IMR-90 (cell line): ENCODE measurements at regions of chrX and their contacts with region 1.

Region 1: GRCh38 chrX:138745196-138745595 is 33.7 kb upstream of the FGF13 start:
- DNase-seq: peak; percentile 60
- ATAC-seq: peak; percentile 92
- H3K4me3 ChIP-seq: no peak overlapping the region
- H3K27ac ChIP-seq: no peak overlapping the region
- H3K4me1 ChIP-seq: no peaks in the 10 kb centered on the region
- H3K27me3 ChIP-seq: no peaks in the 10 kb centered on the region
- CTCF ChIP-seq: peak; percentile 72
- POLR2A ChIP-seq: no peak
- RAD21 ChIP-seq: peak; percentile 63

Region 2: GRCh38 chrX:138128027-138128671 is 617.0 kb before region 1 on chrX:
- CTCF ChIA-PET with region 1: no interaction called
- POLR2A ChIA-PET with region 1: no interaction called
- dilution Hi-C with region 1: no loop called
- in situ Hi-C with region 1: no loop called
- intact Hi-C with region 1: loop called (anchors 1 kb)
- DNase-seq: peak; percentile 11
- ATAC-seq: peak; percentile 75
- H3K4me3 ChIP-seq: no peak overlapping the region
- H3K27ac ChIP-seq: no peak overlapping the region
- H3K4me1 ChIP-seq: no peaks in the 10 kb centered on the region
- H3K27me3 ChIP-seq: no peaks in the 10 kb centered on the region
- CTCF ChIP-seq: peak; percentile 55
- POLR2A ChIP-seq: no peak
- RAD21 ChIP-seq: peak; percentile 23

Region 3: GRCh38 chrX:138191998-138192397 is 553.2 kb before region 1 on chrX:
- CTCF ChIA-PET with region 1: interaction called, 3 read pairs
- POLR2A ChIA-PET with region 1: no interaction called
- dilution Hi-C with region 1: no loop called
- in situ Hi-C with region 1: loop called (anchors 10 kb)
- intact Hi-C with region 1: loop called (anchors 1 kb)
- DNase-seq: peak; percentile 19
- ATAC-seq: 0 out of 2 replicates have a peak, but pooled peaks have one; percentile 32
- H3K4me3 ChIP-seq: no peak overlapping the region
- H3K27ac ChIP-seq: no peak overlapping the region
- H3K4me1 ChIP-seq: no peaks in the 10 kb centered on the region
- H3K27me3 ChIP-seq: no peaks in the 10 kb centered on the region
- CTCF ChIP-seq: peak; percentile 48
- POLR2A ChIP-seq: no peak
- RAD21 ChIP-seq: peak; percentile 44

Region 4: GRCh38 chrX:138463476-138463875 is 281.7 kb before region 1 on chrX:
- CTCF ChIA-PET with region 1: no interaction called
- POLR2A ChIA-PET with region 1: no interaction called
- dilution Hi-C with region 1: no loop called
- in situ Hi-C with region 1: no loop called
- intact Hi-C with region 1: no loop called
- DNase-seq: no peak
- ATAC-seq: no peak
- H3K4me3 ChIP-seq: no peak overlapping the region
- H3K27ac ChIP-seq: no peak overlapping the region
- H3K4me1 ChIP-seq: no peaks in the 10 kb centered on the region
- H3K27me3 ChIP-seq: no peaks in the 10 kb centered on the region
- CTCF ChIP-seq: no peak
- POLR2A ChIP-seq: no peak
- RAD21 ChIP-seq: no peak

Region 5: GRCh38 chrX:138858438-138858837 is 113.2 kb after region 1 on chrX:
- CTCF ChIA-PET with region 1: no interaction called
- POLR2A ChIA-PET with region 1: no interaction called
- dilution Hi-C with region 1: no loop called
- in situ Hi-C with region 1: no loop called
- intact Hi-C with region 1: no loop called
- DNase-seq: peak; percentile 1
- ATAC-seq: no peak
- H3K4me3 ChIP-seq: no peak overlapping the region
- H3K27ac ChIP-seq: no peak overlapping the region
- H3K4me1 ChIP-seq: no peaks in the 10 kb centered on the region
- H3K27me3 ChIP-seq: no peaks in the 10 kb centered on the region
- CTCF ChIP-seq: no peak
- POLR2A ChIP-seq: no peak
- RAD21 ChIP-seq: no peak

Region 6: GRCh38 chrX:139018436-139018835 is 273.2 kb after region 1 on chrX:
- CTCF ChIA-PET with region 1: no interaction called
- POLR2A ChIA-PET with region 1: no interaction called
- dilution Hi-C with region 1: no loop called
- in situ Hi-C with region 1: no loop called
- intact Hi-C with region 1: no loop called
- DNase-seq: no peak
- ATAC-seq: no peak
- H3K4me3 ChIP-seq: no peak overlapping the region
- H3K27ac ChIP-seq: no peak overlapping the region
- H3K4me1 ChIP-seq: no peaks in the 10 kb centered on the region
- H3K27me3 ChIP-seq: no peaks in the 10 kb centered on the region
- CTCF ChIP-seq: no peak
- POLR2A ChIP-seq: no peak
- RAD21 ChIP-seq: no peak

Region 7: GRCh38 chrX:139332441-139332840 is 587.2 kb after region 1 on chrX:
- CTCF ChIA-PET with region 1: no interaction called
- POLR2A ChIA-PET with region 1: no interaction called
- dilution Hi-C with region 1: no loop called
- in situ Hi-C with region 1: no loop called
- intact Hi-C with region 1: no loop called
- DNase-seq: no peak
- ATAC-seq: no peak
- H3K4me3 ChIP-seq: no peak overlapping the region
- H3K27ac ChIP-seq: no peak overlapping the region
- H3K4me1 ChIP-seq: no peaks in the 10 kb centered on the region
- H3K27me3 ChIP-seq: no peaks in the 10 kb centered on the region
- CTCF ChIP-seq: no peak
- POLR2A ChIP-seq: no peak
- RAD21 ChIP-seq: no peak